A549 (cell line): ENCODE measurements at regions of chrX and their contacts with region 1.

Region 1: DNA sequence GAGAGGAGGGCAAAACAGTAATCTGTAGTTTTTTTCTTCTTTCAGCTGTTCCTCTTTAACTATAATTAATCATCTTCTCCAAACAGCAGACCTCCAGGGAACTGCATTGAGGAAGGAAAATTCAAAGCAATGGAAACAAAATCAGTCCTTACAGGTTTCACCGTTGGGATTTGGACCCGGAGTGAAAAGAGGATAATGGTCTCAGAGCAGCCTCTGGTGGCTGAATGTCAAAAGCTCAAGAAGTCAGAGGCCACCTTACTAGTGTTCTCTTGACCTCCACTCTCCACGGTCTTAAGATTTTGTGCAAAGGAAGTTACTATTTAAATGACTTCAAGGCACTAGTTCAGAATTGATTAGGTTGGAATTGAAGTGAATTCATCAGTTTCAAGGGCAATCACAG is 16.0 kb upstream of the MID1 start:
- DNase-seq: peak; percentile 71 to 81
- ATAC-seq: peak; percentile 48 to 73; a peak in 3 of 6 replicates
- H3K4me3 ChIP-seq: no peak overlapping the region
- H3K27ac ChIP-seq: peak overlapping the region; percentile 72 to 87
- H3K4me1 ChIP-seq: peaks cover 39% of the 10 kb centered on the region
- CTCF ChIP-seq: peak; percentile 90
- EP300 ChIP-seq: no peak
- POLR2A ChIP-seq: no peak
- RAD21 ChIP-seq: peak; percentile 94 to 98

Region 2: GRCh38 chrX:10195425-10195824 is 440.9 kb before region 1 on chrX:
- CTCF ChIA-PET with region 1: interaction called, 95 read pairs
- POLR2A ChIA-PET with region 1: interaction called, 7 read pairs
- DNase-seq: no peak
- ATAC-seq: no peak
- H3K4me3 ChIP-seq: no peak overlapping the region
- H3K27ac ChIP-seq: no peak overlapping the region
- H3K4me1 ChIP-seq: peaks cover 8% of the 10 kb centered on the region; the same call in 2 of the 3 replicates
- CTCF ChIP-seq: no peak
- EP300 ChIP-seq: no peak
- POLR2A ChIP-seq: no peak
- RAD21 ChIP-seq: no peak

Region 3: DNA sequence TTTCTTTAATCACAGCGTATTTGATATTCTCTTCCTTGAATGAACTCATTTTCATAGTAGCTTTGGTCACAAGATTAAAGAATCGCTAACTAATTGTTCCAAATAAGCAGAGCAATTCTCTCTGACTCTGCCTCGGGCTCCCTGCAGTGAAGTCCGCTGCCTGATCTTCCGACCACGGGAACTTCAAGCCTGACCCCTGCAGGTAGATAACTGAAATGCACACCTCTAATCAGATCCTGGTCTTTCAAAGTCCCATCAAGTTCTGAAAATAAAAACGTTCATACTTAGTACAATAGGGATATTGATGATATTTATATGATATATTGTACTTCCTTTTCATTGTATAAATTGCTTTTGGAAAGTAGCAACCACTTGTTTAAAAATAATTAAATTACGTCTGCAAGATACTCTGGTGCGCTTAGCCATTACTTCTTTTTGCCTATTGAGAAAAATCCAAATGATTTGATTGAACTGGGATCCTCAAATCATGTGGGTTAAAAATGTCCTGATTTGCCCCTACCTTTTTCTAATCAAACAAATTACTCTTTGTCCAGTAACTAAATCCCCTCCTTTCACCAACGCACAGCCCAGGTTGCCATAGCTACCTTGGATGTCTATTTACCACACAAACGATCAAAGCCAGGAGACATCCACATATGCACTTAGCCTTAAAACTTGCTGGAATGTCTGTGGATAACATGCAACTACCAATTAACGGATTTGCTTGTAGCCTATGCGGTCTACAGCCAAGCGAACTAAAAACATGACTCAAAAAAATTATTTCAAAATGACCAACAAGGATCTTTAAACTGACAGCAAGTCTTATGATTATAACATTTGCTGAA is 20.2 kb before region 1 on chrX:
- CTCF ChIA-PET with region 1: interaction called, 41 read pairs
- POLR2A ChIA-PET with region 1: interaction called, 10 read pairs
- DNase-seq: peak in 1 of 2 experiments; percentile 73
- ATAC-seq: peak; percentile 41 to 52; a peak in 3 of 6 replicates
- H3K4me3 ChIP-seq: peak overlapping the region; percentile 68
- H3K27ac ChIP-seq: peak overlapping the region; percentile 76 to 95
- H3K4me1 ChIP-seq: peaks cover 44% of the 10 kb centered on the region
- CTCF ChIP-seq: peak; percentile 75
- EP300 ChIP-seq: no peak
- POLR2A ChIP-seq: no peak
- RAD21 ChIP-seq: peak; percentile 78

Region 4: DNA sequence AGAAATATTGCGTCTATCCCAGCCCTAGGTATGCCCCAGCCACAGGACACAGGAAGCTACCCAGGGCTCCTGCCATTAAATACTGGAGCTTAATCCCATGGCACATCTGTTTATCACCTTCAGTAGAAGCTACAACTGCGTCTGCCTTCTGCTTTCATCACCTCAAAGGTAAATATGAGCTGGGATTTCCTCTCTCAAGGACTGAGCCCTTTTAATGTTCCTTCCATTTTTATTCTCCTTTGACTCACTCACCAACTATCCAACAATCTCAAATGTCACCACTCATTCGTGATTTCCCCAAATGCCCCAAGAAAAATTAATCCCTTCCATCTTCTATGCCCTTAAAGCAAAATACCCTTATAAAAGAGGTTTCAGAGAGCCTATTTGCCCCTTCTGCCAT is 14.1 kb before region 1 on chrX:
- CTCF ChIA-PET with region 1: interaction called, 41 read pairs
- POLR2A ChIA-PET with region 1: interaction called, 10 read pairs
- DNase-seq: no peak
- ATAC-seq: no peak
- H3K4me3 ChIP-seq: no peak overlapping the region
- H3K27ac ChIP-seq: peak overlapping the region; percentile 76 to 95
- H3K4me1 ChIP-seq: peaks cover 23% of the 10 kb centered on the region
- CTCF ChIP-seq: no peak
- EP300 ChIP-seq: no peak
- POLR2A ChIP-seq: no peak
- RAD21 ChIP-seq: no peak

Region 5: GRCh38 chrX:10667143-10667542 is 30.8 kb after region 1 on chrX:
- CTCF ChIA-PET with region 1: no interaction called
- POLR2A ChIA-PET with region 1: no interaction called
- DNase-seq: no peak
- ATAC-seq: no peak
- H3K4me3 ChIP-seq: no peak overlapping the region
- H3K27ac ChIP-seq: no peak overlapping the region
- H3K4me1 ChIP-seq: no peaks in the 10 kb centered on the region
- CTCF ChIP-seq: no peak
- EP300 ChIP-seq: no peak
- POLR2A ChIP-seq: no peak
- RAD21 ChIP-seq: no peak

Region 6: DNA sequence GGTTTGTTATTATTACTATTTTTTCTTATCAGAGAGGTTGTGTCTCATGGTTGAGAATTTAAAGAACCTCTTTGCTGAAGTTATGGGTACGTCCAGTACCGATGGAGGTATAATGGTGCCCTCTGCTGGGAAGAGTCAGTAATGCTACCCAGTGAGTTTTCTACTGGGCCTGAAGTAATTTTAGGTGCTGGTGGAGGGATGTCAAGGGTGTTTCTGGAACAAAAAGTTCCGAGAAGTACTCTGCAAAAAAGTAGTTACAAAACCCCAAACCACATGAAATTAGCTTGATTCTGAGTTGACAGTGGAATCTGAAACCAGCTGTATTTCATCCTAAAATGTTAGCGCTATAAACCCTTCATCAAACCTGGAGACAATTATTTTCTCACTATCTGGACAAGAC is 86.5 kb after region 1 on chrX:
- CTCF ChIA-PET with region 1: interaction called, 11 read pairs
- POLR2A ChIA-PET with region 1: no interaction called
- DNase-seq: peak; percentile 47 to 51
- ATAC-seq: peak; percentile 83 to 88; a peak in 5 of 6 replicates
- H3K4me3 ChIP-seq: no peak overlapping the region
- H3K27ac ChIP-seq: 0 out of 6 replicates have a peak overlapping the region, but pooled peaks of 1 of the 2 experiments have one; percentile 20
- H3K4me1 ChIP-seq: no peaks in the 10 kb centered on the region; the same call in 2 of the 3 replicates
- CTCF ChIP-seq: peak; percentile 66
- EP300 ChIP-seq: no peak
- POLR2A ChIP-seq: no peak
- RAD21 ChIP-seq: peak; percentile 76 to 77